Right ventricle myocardium inferior (tissue), 1 donor: ENCODE measurements at regions of chr4 and their contacts with region 1.

Region 1: DNA sequence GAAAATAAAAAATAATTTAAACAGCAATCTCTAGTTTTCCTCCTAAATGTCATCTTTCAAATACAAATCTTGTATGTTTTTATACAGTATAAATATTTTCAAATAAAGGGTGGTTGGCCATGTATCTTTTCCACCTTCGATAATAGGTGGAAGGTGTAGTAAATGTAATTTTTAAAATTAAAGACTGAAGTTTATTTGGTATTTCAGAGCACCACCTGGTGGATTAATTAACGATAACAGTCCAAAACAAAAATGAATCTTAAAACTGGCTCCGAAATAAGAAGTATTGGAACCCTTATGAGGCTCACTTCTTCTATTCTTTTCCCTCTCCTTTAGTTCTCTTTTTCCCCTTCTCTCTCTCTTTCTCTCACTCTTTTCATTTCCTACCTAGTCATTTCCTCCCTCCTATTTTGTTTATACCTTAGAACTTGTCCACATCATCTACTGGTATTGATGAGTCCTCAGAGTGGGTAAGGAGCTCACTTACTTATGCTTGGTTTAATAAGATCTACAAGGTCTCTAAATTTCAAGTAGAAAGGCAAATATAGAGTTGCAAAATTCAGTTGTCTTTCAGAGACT is 82.9 kb upstream of the EXOC1L start:
- DNase-seq: no peak
- ATAC-seq: no peak

Region 2: DNA sequence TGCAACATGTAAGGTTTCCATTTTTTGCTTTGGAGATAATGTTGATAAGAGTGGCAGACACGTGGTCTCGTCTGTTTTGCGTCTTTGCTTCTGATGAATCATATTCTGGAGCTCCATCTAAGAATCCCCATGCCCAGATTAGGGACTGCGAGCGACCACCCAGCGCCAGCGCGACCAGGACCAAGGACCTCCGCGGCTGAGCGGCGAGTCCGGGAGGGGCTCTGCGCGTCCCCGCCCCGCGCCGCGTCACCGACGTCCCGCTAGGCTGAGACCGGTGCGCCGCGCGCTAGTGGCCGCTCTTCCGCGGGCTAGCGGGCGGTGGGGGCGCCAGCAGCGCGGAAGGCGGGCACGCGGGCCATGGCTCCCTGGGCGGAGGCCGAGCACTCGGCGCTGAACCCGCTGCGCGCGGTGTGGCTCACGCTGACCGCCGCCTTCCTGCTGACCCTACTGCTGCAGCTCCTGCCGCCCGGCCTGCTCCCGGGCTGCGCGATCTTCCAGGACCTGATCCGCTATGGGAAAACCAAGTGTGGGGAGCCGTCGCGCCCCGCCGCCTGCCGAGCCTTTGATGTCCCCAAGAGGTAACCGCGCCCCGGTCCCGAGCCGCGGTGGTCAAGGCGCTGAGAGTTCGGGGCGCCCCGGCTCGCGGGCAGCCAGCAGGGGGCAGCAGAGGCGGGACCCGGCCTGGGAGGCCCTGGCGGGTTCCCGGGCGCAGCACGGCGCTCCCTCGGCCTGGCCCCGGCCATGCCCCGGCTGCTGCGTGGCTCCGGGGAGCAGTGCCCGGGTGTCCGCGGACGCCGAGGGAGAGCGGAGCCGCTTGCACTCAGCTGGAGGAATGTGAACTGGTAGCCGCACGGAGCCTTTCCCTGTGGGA is 390.5 kb before region 1 on chr4 and contains the start of gene SRD5A3:
- intact Hi-C with region 1: loop called (anchors 10 kb)
- DNase-seq: peak; percentile 93
- ATAC-seq: peak; percentile 98
- total RNA-seq, gene SRD5A3: 9.5 TPM

Region 3: GRCh38 chr4:55546756-55547465 is 189.8 kb before region 1 on chr4 and contains the start of gene CLOCK:
- intact Hi-C with region 1: no loop called
- DNase-seq: peak; percentile 95
- ATAC-seq: peak; percentile 93
- total RNA-seq, gene CLOCK: 36.2 TPM

Region 4: DNA sequence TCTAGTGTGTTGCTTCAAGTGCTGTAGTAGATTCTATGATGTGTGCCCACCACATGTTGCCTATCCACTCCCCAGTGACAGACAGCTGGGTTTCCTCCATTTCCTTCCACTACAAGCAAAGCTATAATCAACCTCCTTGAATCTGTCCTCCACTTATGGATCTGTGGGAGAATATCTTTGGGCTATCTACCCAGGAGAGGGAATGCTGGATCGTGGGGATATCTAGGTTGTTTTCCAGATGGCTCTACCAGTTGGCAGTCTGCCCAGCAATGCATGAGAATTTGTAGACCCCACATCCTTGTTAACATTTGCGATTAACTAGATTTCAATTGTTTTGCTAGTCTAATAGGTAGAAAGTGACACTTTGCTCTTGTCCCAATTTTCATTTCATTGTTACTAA is 110.9 kb before region 1 on chr4:
- intact Hi-C with region 1: no loop called
- DNase-seq: no peak
- ATAC-seq: no peak